ENCODE measurements at regions of chr15 and their contacts with region 1.

Region 1: DNA sequence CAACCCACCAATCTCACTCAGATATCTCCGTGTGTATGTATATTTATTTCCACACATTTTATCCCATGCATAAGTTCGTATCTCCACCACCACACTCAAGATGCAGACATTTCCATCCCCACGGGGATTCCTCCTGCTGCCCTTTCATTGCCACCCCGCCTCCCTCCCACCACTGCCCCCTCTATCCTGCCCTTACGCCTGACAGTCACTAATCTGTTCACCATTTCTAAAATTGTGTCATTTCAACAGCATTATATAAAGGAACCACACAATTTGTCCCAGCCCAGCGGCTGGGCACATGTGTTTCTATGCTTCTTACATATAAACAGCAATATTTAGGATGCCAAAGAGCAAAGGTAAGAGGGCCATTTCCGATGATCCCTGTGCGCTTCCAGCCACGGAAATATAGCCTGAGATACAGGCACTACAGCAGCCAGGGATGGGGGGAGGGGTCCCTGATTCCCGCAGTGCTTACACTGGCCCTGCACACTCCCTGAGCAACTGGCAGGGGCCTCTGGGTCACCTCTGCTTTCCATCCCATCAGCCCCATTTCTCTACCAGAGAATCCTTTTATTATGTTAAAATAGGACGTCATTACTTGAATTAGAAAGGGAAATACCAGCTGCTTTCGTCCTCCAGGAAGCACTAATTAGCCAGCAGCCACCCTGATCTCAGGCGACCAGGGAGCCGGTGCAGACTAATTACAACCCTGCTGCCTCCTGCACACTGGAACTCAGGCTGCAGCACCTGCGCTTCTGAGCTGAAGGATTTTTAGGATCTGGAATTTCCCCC is 372.0 kb upstream of the ATP10A start:
- DNase-seq: no peak
- H3K4me3 ChIP-seq: no peak overlapping the region
- H3K27ac ChIP-seq: no peak overlapping the region
- H3K4me1 ChIP-seq: no peaks in the 10 kb centered on the region
- H3K27me3 ChIP-seq: no peaks in the 10 kb centered on the region

Region 2: DNA sequence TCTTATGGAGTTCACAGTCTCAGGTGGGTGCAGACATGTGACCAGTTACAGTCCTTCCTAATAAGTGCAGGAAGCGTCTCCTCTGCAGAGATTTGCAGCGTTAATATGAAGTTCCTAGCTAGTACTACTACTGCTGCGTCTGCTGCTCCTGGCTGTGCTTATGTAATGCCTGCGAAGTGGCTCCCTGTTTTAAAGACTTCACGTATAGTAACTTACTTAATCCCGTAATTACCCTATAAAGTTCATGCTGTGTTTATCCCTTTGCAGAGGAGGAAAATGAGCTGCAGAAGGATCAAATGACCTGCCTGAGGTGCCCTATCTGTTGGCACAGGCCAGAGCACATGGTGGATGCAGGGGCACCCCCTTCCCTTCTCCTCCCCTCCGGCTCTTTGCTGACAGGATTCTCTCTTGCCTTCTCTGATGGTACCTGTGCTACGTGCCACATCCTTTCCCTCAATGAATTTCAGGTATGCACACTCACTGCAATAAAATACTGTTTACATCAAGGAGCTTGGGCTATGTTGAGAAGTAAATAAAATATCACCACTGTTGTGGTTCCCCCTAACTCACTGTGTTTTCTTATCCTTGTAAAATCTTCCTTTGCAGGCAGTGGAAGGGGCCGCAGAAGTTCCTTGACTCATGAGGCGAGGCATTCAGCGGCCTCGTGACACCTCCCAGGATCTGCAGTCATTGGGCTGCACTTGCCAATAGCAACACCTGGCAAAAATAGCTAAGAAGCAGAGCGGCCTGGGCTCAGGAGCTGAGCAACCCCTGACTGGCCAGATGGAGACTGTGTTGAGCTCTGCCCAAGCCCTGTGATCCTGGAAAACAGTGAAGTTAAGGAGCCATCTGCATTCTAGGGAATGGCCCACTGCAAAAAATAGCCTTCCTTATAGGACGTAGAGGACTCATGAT is 183.2 kb before region 1 on chr15:
- in situ Hi-C with region 1: loop called (anchors 10 kb)
- DNase-seq: peak; percentile 72
- H3K4me3 ChIP-seq: no peak overlapping the region
- H3K27ac ChIP-seq: no peak overlapping the region
- H3K4me1 ChIP-seq: no peaks in the 10 kb centered on the region
- H3K27me3 ChIP-seq: peaks cover 10% of the 10 kb centered on the region; the same call in 1 of the 2 replicates